ENCODE measurements at regions of chr9 and their contacts with region 1.

Region 1: GRCh38 chr9:91422758-91423711 is 597 bp downstream of the NFIL3 start:
- DNase-seq: peak in 2 of 3 donors; percentile 43 to 57
- H3K4me3 ChIP-seq: peak overlapping the region; percentile 96 to 99 (median 97)
- H3K4me3 Mint-ChIP-seq: peak overlapping the region; percentile 99 to 100
- H3K27ac ChIP-seq: peak overlapping the region; percentile 66 to 97
- H3K27ac Mint-ChIP-seq: peak overlapping the region; percentile 93 to 100 (median 97)
- H3K4me1 ChIP-seq: peaks cover 61 to 74% of the 10 kb centered on the region in 2 donors
- H3K4me1 Mint-ChIP-seq: peaks cover 57% of the 10 kb centered on the region
- H3K27me3 ChIP-seq: peaks cover 6 to 13% of the 10 kb centered on the region in 2 donors
- H3K27me3 Mint-ChIP-seq: peaks cover 10 to 33% (median 21%) of the 10 kb centered on the region in 3 donors
- CTCF ChIP-seq: no peak

Region 2: GRCh38 chr9:90169490-90169889 is 1253.5 kb before region 1 on chr9:
- intact Hi-C with region 1: no loop called
- DNase-seq: no peak
- H3K4me3 ChIP-seq: no peak overlapping the region
- H3K4me3 Mint-ChIP-seq: no peak overlapping the region
- H3K27ac ChIP-seq: no peak overlapping the region
- H3K27ac Mint-ChIP-seq: no peak overlapping the region
- H3K4me1 ChIP-seq: peaks cover 6 to 8% of the 10 kb centered on the region in 2 donors
- H3K4me1 Mint-ChIP-seq: peaks cover 8% of the 10 kb centered on the region
- H3K27me3 ChIP-seq: no peaks in the 10 kb centered on the region
- H3K27me3 Mint-ChIP-seq: peaks cover 0 to 3% (median 2%) of the 10 kb centered on the region in 3 donors
- CTCF ChIP-seq: no peak

Region 3: GRCh38 chr9:90801583-90802289 is 621.3 kb before region 1 on chr9 and contains the start of gene SYK:
- intact Hi-C with region 1: loop called in 1 of 2 experiments (anchors 10 kb)
- DNase-seq: peak; percentile 87 to 91 (median 89)
- H3K4me3 ChIP-seq: peak within 1 kb of the TSS; percentile 78 to 98 (median 97)
- H3K4me3 Mint-ChIP-seq: peak within 1 kb of the TSS; percentile 93
- H3K27ac ChIP-seq: peak within 1 kb of the TSS; percentile 98 to 99
- H3K27ac Mint-ChIP-seq: peak within 1 kb of the TSS; percentile 96 to 99 (median 97)
- H3K4me1 ChIP-seq: peaks cover 74 to 88% of the 10 kb centered on the region in 2 donors
- H3K4me1 Mint-ChIP-seq: peaks cover 73% of the 10 kb centered on the region
- H3K27me3 ChIP-seq: no peaks in the 10 kb centered on the region
- H3K27me3 Mint-ChIP-seq: peaks cover 0 to 3% (median 3%) of the 10 kb centered on the region in 3 donors
- CTCF ChIP-seq: no peak
- polyA plus RNA-seq, gene SYK: 51.1 to 186 (median 177) TPM

Region 4: GRCh38 chr9:91036826-91037510 is 386.1 kb before region 1 on chr9:
- intact Hi-C with region 1: loop called in 1 of 2 experiments (anchors 5 kb)
- DNase-seq: peak; percentile 67 to 81 (median 68)
- H3K4me3 ChIP-seq: no peak overlapping the region
- H3K4me3 Mint-ChIP-seq: peak overlapping the region; percentile 39 to 78
- H3K27ac ChIP-seq: no peak overlapping the region
- H3K27ac Mint-ChIP-seq: peak overlapping the region in 2 of 7 donors; percentile 20 to 61
- H3K4me1 ChIP-seq: peaks cover 10 to 11% of the 10 kb centered on the region in 2 donors
- H3K4me1 Mint-ChIP-seq: peaks cover 17% of the 10 kb centered on the region
- H3K27me3 ChIP-seq: peaks cover 0 to 3% of the 10 kb centered on the region in 2 donors
- H3K27me3 Mint-ChIP-seq: peaks cover 5 to 14% (median 13%) of the 10 kb centered on the region in 3 donors
- CTCF ChIP-seq: peak; percentile 64

Region 5: DNA sequence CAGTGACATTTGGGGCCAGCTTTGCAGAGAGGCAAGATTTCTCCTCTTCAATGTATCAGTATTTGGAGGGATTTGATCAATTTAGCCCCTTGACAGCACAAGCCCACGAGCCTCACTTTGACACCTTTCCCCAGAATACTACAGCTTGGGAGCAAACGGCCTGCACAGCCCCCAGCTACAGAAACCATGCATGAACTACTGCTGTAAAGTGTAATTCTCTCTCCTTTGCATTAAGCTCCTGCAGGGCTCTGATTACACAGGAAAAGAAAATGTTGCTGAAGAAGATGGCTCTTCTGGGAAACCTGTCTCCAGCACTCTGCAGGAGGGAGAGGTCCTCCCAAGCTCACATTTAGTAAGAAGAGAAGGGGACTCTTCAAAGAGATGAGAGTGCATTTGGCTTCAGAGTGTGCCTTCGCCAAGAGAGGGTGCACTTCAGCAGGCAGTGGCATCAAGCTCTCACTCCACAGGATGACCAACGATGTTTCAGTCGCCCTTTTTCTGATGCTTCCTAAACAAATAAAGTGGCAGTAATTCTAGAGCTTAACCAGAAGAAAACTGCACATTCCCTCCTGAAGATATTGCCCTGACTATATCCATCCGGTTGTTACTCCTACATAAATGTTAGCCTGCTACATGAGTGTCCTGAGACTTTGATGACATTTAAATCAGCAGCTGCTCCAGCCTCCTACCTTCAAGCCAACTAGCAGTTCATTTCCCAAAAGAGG is 333.5 kb before region 1 on chr9:
- intact Hi-C with region 1: loop called in 1 of 2 experiments (anchors 5 kb)
- DNase-seq: peak in 2 of 3 donors; percentile 8 to 29
- H3K4me3 ChIP-seq: no peak overlapping the region
- H3K4me3 Mint-ChIP-seq: no peak overlapping the region
- H3K27ac ChIP-seq: no peak overlapping the region
- H3K27ac Mint-ChIP-seq: peak overlapping the region in 1 of 7 donors; percentile 57
- H3K4me1 ChIP-seq: peaks cover 30 to 31% of the 10 kb centered on the region in 2 donors
- H3K4me1 Mint-ChIP-seq: peaks cover 32% of the 10 kb centered on the region
- H3K27me3 ChIP-seq: no peaks in the 10 kb centered on the region
- H3K27me3 Mint-ChIP-seq: no peaks in the 10 kb centered on the region
- CTCF ChIP-seq: peak; percentile 19

Region 6: GRCh38 chr9:91150998-91151717 is 271.9 kb before region 1 on chr9:
- intact Hi-C with region 1: loop called in 1 of 2 experiments (anchors 5 kb)
- DNase-seq: peak; percentile 89 to 96 (median 95)
- H3K4me3 ChIP-seq: no peak overlapping the region
- H3K4me3 Mint-ChIP-seq: peak overlapping the region; percentile 31 to 46
- H3K27ac ChIP-seq: peak overlapping the region in 1 of 2 donors; percentile 76
- H3K27ac Mint-ChIP-seq: peak overlapping the region; percentile 87 to 96 (median 94)
- H3K4me1 ChIP-seq: peaks cover 47 to 48% of the 10 kb centered on the region in 2 donors
- H3K4me1 Mint-ChIP-seq: peaks cover 57% of the 10 kb centered on the region
- H3K27me3 ChIP-seq: no peaks in the 10 kb centered on the region
- H3K27me3 Mint-ChIP-seq: peaks cover 2 to 8% (median 6%) of the 10 kb centered on the region in 3 donors
- CTCF ChIP-seq: no peak

Region 7: DNA sequence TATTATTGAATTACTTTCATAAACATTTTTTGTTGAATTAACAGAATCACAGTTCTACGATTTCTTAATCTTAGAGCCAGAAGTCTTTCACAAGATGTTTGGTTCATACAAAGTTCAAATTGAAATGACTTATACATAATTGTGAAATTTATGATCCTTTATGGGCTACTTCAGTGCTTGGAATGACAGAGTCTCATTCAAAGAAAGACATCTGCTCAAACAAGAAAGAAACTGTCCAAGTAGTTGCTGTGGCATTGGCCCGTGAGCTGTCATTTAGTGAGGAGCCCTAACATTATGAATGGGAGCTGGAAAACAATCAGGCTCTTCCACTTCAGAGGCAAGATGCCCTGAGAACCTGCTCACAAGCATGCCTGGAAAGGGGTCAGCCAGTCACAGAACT is 124.7 kb before region 1 on chr9:
- intact Hi-C with region 1: loop called (anchors 5 kb)
- DNase-seq: peak; percentile 68 to 88 (median 77)
- H3K4me3 ChIP-seq: peak overlapping the region in 1 of 3 experiments; percentile 36
- H3K4me3 Mint-ChIP-seq: peak overlapping the region; percentile 56 to 73
- H3K27ac ChIP-seq: peak overlapping the region; percentile 67 to 71
- H3K27ac Mint-ChIP-seq: peak overlapping the region; percentile 90 to 97 (median 96)
- H3K4me1 ChIP-seq: peaks cover 40 to 63% of the 10 kb centered on the region in 2 donors
- H3K4me1 Mint-ChIP-seq: peaks cover 60% of the 10 kb centered on the region
- H3K27me3 ChIP-seq: no peaks in the 10 kb centered on the region
- H3K27me3 Mint-ChIP-seq: peaks cover 0 to 3% (median 0%) of the 10 kb centered on the region in 3 donors
- CTCF ChIP-seq: no peak

Region 8: DNA sequence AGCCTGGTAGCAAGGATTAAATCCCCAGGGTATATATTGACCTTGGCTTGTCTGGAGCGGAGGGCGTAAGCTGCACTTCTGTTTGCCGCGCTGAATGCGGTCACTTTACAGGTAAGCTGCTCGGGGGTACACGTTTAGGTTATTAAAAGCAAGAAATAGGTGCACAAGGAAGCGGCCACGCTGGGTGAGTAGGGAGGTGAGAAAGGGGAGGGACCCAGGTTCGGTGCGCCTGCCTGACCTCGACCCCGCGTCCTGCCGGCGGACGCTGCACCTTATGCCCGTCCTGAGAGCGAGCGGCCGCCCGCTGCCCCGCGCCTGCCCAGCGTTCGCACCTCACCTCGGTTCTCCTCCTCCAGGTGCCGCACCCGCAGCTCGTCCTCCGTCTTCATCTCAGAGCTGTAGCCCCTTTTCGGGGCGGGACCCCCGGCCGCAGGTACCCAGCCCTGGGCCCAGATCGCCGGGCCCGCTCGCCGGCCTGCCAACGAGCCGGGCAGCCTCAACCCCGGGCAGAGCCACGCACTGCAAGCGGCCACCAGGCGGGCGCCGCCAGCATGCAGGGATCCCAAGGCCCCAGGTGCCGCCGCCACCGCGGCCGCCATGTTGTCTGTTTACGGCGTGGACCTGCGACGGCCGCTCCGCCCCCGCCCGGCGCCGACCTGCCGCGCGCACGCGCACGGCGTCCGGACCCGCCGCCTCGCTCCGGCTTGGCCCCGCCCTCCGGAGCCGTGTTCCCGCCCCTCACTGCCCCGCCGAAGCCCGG is 61.6 kb before region 1 on chr9 and contains the start of gene AUH:
- intact Hi-C with region 1: loop called (anchors 5 kb)
- DNase-seq: peak; percentile 66 to 82 (median 78)
- H3K4me3 ChIP-seq: peak within 1 kb of the TSS; percentile 74 to 89 (median 83)
- H3K4me3 Mint-ChIP-seq: peak within 1 kb of the TSS; percentile 99
- H3K27ac ChIP-seq: peak within 1 kb of the TSS in 1 of 2 donors; percentile 77
- H3K27ac Mint-ChIP-seq: peak within 1 kb of the TSS; percentile 78 to 92 (median 89)
- H3K4me1 ChIP-seq: peaks cover 16 to 21% of the 10 kb centered on the region in 2 donors
- H3K4me1 Mint-ChIP-seq: peaks cover 24% of the 10 kb centered on the region
- H3K27me3 ChIP-seq: no peaks in the 10 kb centered on the region
- H3K27me3 Mint-ChIP-seq: peaks cover 0 to 1% (median 0%) of the 10 kb centered on the region in 3 donors
- CTCF ChIP-seq: no peak
- polyA plus RNA-seq, gene AUH: 4.0 to 9.9 (median 8.4) TPM

Measured in CD14-positive monocyte (primary cell).